Activated T-helper 1 cell treated with anti-CD3 and anti-CD28 coated beads, Interleukin-12 subunit alpha, Interleukin-12 subunit beta, Interleukin-2, Interleukin-4 antibody, amounts not matched to agents 30 ng/mL and 10 ng/mL and 1 ng/mL, durations not matched to agents 14 hours and 24 hours and 36 hours (primary cell): ENCODE measurements at regions of chr17 and their contacts with region 1.

Region 1: DNA sequence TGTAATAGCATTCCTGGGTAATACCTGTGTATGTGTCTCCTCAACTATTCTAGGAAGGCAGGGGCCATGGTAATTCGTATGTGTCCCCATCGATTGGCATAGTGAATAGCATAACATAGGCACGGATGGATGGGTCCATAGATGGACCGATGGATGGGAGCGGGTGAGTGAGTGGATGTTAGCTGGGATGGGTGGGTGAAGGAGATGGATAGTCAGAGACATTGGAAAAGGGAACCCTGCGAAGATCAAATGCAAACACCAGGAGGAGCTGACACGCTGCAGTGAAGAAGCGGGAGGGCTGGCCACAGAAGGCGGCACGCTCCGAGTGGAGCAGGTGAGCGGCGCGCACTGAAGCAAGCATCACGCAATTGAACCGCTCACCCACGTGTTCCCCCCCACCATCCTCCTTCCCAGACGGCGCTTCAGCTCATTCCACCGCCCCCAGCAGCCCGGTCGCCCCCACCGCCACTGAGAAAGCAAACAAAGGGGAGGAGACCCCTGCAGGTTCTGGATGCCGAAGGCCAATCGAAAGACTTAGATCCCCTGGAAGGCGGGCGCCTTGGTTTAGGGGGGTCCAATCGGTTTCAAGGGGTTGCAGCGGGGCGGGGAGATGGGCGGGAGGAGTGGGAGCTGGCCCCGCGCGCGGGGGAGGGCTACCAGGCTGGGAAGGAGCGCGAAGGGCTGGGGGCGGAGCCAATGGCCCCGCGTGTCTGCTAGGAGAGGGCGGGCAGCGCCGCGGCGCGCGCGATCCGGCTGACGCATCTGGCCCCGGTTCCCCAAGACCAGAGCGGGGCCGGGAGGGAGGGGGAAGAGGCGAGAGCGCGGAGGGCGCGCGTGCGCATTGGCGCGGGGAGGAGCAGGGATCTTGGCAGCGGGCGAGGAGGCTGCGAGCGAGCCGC is at the start of gene ARRB2:
- DNase-seq: peak; percentile 99
- H3K4me3 Mint-ChIP-seq: peak within 1 kb of the TSS; percentile 98
- H3K27ac Mint-ChIP-seq: peak within 1 kb of the TSS; percentile 99
- H3K4me1 Mint-ChIP-seq: peaks cover 54% of the 10 kb centered on the region
- H3K27me3 Mint-ChIP-seq: no peaks in the 10 kb centered on the region
- total RNA-seq, gene ARRB2: 202 and 204 TPM in 2 replicates

Region 2: GRCh38 chr17:4366327-4367063 is 343.5 kb before region 1 on chr17 and contains the start of gene UBE2G1:
- intact Hi-C with region 1: loop called (anchors 10 kb)
- DNase-seq: peak; percentile 97
- H3K4me3 Mint-ChIP-seq: peak within 1 kb of the TSS; percentile 72
- H3K27ac Mint-ChIP-seq: peak within 1 kb of the TSS; percentile 86
- H3K4me1 Mint-ChIP-seq: peaks cover 30% of the 10 kb centered on the region
- H3K27me3 Mint-ChIP-seq: no peaks in the 10 kb centered on the region
- total RNA-seq, gene UBE2G1: 80.3 and 87.3 TPM in 2 replicates

Region 3: GRCh38 chr17:4789901-4790704 is 80.1 kb after region 1 on chr17:
- intact Hi-C with region 1: loop called (anchors 1 kb)
- DNase-seq: peak; percentile 82
- H3K4me3 Mint-ChIP-seq: peak overlapping the region; percentile 85
- H3K27ac Mint-ChIP-seq: peak overlapping the region; percentile 96
- H3K4me1 Mint-ChIP-seq: peaks cover 36% of the 10 kb centered on the region
- H3K27me3 Mint-ChIP-seq: peaks cover 45% of the 10 kb centered on the region

Region 4: GRCh38 chr17:4806777-4807604 is 96.9 kb after region 1 on chr17 and contains the start of gene PLD2:
- intact Hi-C with region 1: loop called (anchors 1 kb)
- DNase-seq: peak; percentile 89
- H3K4me3 Mint-ChIP-seq: peak within 1 kb of the TSS; percentile 82
- H3K27ac Mint-ChIP-seq: peak within 1 kb of the TSS; percentile 34
- H3K4me1 Mint-ChIP-seq: peaks cover 11% of the 10 kb centered on the region
- H3K27me3 Mint-ChIP-seq: peaks cover 2% of the 10 kb centered on the region
- total RNA-seq, gene PLD2: 16.7 and 22.2 TPM in 2 replicates

Region 5: DNA sequence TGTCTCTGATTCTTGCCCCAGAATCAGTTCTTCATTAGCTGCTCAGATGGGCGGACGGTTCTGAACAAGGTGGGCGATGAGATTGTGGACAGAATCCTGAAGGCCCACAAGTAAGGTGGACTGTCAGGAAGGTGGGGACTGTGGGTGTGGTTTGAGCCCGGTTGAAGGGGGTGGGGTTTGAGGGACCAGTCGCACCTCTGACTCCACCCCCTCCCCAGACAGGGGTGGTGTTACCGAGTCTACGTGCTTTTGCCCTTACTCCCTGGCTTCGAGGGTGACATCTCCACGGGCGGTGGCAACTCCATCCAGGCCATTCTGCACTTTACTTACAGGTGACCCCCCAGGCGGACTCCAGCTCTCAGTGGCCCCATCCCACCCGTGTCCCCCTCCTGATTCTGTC is 108.2 kb after region 1 on chr17:
- intact Hi-C with region 1: no loop called
- DNase-seq: no peak
- H3K4me3 Mint-ChIP-seq: no peak overlapping the region
- H3K27ac Mint-ChIP-seq: no peak overlapping the region
- H3K4me1 Mint-ChIP-seq: no peaks in the 10 kb centered on the region
- H3K27me3 Mint-ChIP-seq: no peaks in the 10 kb centered on the region

Region 6: DNA sequence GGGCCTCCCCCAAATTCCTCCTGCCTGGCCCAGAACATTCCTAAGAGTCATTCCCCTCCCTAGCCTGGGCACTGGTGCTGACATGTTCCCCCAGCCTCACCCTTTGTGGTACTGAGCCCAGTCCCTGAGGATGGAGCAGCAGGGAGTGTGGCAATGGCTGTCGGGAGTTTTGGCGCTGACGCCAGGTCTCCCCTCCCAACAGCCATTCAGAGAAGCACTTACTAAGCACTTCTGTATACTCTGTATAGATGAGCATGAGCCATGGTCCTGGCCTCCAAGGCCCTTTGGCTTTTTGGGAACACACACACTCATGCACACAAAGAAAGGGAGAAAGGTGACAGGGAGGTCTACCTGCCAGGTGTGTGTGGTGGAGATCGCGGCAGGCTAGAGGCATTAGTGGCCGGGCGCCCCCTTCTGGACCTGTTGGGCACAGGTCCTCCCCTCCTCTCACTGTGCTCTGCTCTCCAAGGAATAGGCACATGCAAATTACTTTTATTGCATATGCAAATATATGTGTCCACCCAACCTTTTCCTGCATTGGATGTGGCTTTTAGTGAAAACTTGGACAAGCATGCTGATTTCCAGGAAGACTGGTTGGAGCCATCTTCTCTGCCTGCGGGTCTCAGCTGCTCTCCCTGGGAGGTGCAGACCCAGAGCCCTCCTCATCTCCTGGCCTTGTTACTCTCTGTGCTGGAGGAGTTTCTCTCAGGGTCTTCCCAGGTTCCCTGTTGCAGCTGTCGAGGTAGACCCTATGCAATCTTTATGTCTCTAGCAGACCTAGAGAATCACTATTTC is 171.9 kb after region 1 on chr17:
- intact Hi-C with region 1: loop called (anchors 1 kb)
- DNase-seq: peak; percentile 40
- H3K4me3 Mint-ChIP-seq: no peak overlapping the region
- H3K27ac Mint-ChIP-seq: no peak overlapping the region
- H3K4me1 Mint-ChIP-seq: peaks cover 5% of the 10 kb centered on the region
- H3K27me3 Mint-ChIP-seq: no peaks in the 10 kb centered on the region

Region 7: DNA sequence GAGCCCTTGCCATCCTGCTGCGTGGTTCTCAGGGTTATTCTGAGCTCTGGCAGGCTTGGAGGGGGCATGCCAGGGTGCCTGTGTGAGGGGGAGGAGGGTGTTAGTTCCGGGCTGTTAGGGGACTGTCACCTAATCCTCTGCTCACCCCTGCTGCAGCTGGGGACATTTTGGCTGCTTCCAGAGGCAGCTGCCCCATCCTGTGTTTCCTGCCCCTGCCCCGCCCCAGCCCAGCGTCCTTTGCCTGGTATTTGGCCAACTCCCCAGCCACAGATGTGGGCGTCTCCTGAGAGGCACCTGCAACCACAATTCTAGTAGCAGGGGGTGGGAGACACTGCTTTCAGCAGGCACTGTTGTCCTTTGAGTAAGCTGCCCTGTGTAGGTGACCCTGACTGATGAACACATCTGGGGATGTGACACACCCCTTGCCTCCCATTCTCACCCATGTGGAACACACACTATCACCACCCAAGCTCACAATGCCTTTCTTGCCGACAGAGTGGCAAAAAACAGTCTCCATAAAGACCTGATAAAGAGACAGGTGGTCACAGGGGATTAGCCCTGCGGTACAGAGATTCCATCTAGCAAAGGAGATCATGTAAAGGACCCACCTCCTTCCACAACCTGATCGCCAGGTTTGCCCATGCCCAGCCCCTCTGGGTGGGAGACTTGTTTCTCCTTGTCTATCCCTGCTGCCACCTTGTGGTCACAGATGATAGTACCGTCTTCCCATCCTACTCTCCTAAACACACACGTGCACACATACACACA is 193.2 kb after region 1 on chr17 and contains the start of gene CHRNE:
- intact Hi-C with region 1: loop called (anchors 1 kb)
- DNase-seq: peak; percentile 61
- H3K4me3 Mint-ChIP-seq: peak within 1 kb of the TSS; percentile 21
- H3K27ac Mint-ChIP-seq: peak within 1 kb of the TSS; percentile 52
- H3K4me1 Mint-ChIP-seq: peaks cover 25% of the 10 kb centered on the region
- H3K27me3 Mint-ChIP-seq: peaks cover 16% of the 10 kb centered on the region
- total RNA-seq, gene CHRNE: 0.52 and 0.61 TPM in 2 replicates

Region 8: GRCh38 chr17:5563456-5563855 is 853.4 kb after region 1 on chr17:
- intact Hi-C with region 1: no loop called
- DNase-seq: no peak
- H3K4me3 Mint-ChIP-seq: no peak overlapping the region
- H3K27ac Mint-ChIP-seq: no peak overlapping the region
- H3K4me1 Mint-ChIP-seq: peaks cover 12% of the 10 kb centered on the region
- H3K27me3 Mint-ChIP-seq: no peaks in the 10 kb centered on the region